ENCODE measurements at regions of chr3 and their contacts with region 1.

Region 1: DNA sequence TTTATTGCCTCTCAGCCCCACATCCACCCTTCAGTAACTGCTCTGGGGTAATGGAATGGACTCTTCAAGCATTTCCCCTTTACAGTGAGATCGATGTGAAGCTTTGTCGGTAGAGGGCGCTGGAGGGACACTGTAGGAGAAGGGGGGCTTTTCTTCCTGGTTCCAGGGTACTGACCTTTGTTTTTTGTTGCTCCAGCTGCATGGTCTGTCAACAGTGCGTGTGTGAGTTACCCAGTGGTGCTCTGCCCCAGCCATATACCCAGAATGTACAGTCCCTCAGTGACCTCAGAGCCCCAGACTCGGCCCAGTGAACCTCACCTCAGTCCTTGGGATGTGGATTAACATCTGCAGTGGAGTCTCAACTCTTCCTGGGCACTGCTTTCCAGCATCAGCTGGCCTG is 180.3 kb upstream of the TSC22D2 start:
- DNase-seq: peak; percentile 71
- H3K4me3 ChIP-seq: no peak overlapping the region
- H3K27ac ChIP-seq: no peak overlapping the region
- H3K4me1 ChIP-seq: peaks cover 1% of the 10 kb centered on the region
- H3K27me3 ChIP-seq: no peaks in the 10 kb centered on the region

Region 2: DNA sequence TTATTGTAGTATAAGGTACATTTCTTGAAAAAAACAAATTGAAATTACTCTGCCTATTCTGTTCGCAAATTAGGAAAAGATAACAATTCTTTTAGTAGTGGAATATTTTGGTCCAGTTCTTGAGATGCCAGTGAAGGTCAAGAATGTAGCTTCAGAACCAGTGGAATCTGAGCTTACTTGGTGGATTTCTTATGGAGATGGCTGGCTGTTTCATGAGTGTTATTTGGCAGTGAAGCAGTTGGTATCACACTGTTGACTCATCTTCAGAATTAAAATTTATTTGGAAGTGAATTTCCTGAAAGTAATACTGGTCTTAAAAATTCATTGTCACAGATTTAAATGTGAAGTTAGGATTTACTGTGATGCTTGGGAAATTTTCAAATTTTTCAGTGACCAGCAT is 395.8 kb before region 1 on chr3:
- in situ Hi-C with region 1: no loop called
- DNase-seq: peak; percentile 67
- H3K4me3 ChIP-seq: no peak overlapping the region
- H3K27ac ChIP-seq: no peak overlapping the region
- H3K4me1 ChIP-seq: peaks cover 8% of the 10 kb centered on the region; the same call in 1 of the 2 replicates
- H3K27me3 ChIP-seq: no peaks in the 10 kb centered on the region

Region 3: GRCh38 chr3:150409512-150410310 is 181.9 kb after region 1 on chr3:
- in situ Hi-C with region 1: loop called (anchors 10 kb)
- DNase-seq: peak; percentile 82
- H3K4me3 ChIP-seq: peak overlapping the region; percentile 81
- H3K27ac ChIP-seq: peak overlapping the region; percentile 99
- H3K4me1 ChIP-seq: peaks cover 24% of the 10 kb centered on the region
- H3K27me3 ChIP-seq: no peaks in the 10 kb centered on the region

Region 4: GRCh38 chr3:150495563-150496168 is 267.8 kb after region 1 on chr3:
- in situ Hi-C with region 1: loop called (anchors 5 kb)
- DNase-seq: peak; percentile 65
- H3K4me3 ChIP-seq: no peak overlapping the region
- H3K27ac ChIP-seq: no peak overlapping the region
- H3K4me1 ChIP-seq: peaks cover 16% of the 10 kb centered on the region
- H3K27me3 ChIP-seq: no peaks in the 10 kb centered on the region

Region 5: GRCh38 chr3:150710097-150710496 is 482.3 kb after region 1 on chr3:
- in situ Hi-C with region 1: no loop called
- DNase-seq: no peak
- H3K4me3 ChIP-seq: no peak overlapping the region
- H3K27ac ChIP-seq: no peak overlapping the region
- H3K4me1 ChIP-seq: no peaks in the 10 kb centered on the region
- H3K27me3 ChIP-seq: no peaks in the 10 kb centered on the region